Left colon (tissue), 2 donors: ENCODE measurements at regions of chr7 and their contacts with region 1.

Region 1: GRCh38 chr7:101287032-101287431 is 34.6 kb downstream of the IFT22 start:
- DNase-seq: no peak
- ATAC-seq: no peak

Region 2: GRCh38 chr7:101099969-101100781 is 186.9 kb before region 1 on chr7:
- intact Hi-C with region 1: no loop called
- DNase-seq: peak; percentile 68 to 87
- ATAC-seq: peak; percentile 45

Region 3: GRCh38 chr7:101140339-101140699 is 146.7 kb before region 1 on chr7:
- intact Hi-C with region 1: loop called in 1 of 2 experiments (anchors 5 kb)
- DNase-seq: no peak
- ATAC-seq: no peak